ENCODE measurements at regions of chr1 and their contacts with region 1.

Region 1: GRCh38 chr1:162633081-162633762 is 958 bp downstream of the DDR2 start:
- DNase-seq: no peak
- H3K4me3 ChIP-seq: peak overlapping the region; percentile 7 to 9
- H3K27ac ChIP-seq: peak overlapping the region; percentile 71 to 72
- H3K4me1 ChIP-seq: no peaks in the 10 kb centered on the region
- H3K27me3 ChIP-seq: no peaks in the 10 kb centered on the region
- CTCF ChIP-seq: no peak
- POLR2A ChIP-seq: no peak

Region 2: DNA sequence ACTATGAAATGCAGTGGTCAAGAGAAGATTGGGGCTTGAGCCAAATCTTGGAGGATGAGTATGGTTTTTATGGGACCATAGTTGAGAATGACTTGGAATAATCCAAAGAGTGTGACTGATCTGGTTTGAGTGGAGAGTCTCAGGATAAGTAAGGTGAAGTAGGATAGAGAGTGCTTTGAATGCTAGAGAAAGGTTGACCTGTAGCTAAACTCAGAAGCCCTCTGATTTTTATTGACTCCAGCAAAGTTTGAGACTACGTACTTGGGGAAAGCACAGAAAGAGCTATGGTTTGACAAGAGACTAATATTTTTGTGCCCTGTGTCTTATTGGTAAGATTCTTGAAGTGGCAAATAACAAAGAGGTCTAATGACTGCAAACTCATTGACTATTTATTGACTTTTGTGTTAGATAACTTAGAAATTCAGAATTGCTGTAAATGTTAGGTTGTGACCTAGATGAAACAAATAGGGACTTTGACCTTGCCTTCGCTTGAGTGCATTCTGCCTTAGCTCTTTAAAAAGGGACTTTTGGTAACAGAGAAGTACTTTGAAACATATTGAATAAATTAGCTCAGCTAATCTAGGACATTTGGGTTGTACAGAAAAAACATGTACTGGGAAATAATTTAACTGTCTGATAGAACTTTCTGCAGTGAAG is 36.6 kb before region 1 on chr1:
- intact Hi-C with region 1: no loop called
- DNase-seq: no peak
- H3K4me3 ChIP-seq: no peak overlapping the region
- H3K27ac ChIP-seq: no peak overlapping the region
- H3K4me1 ChIP-seq: no peaks in the 10 kb centered on the region
- H3K27me3 ChIP-seq: no peaks in the 10 kb centered on the region
- CTCF ChIP-seq: no peak
- POLR2A ChIP-seq: no peak

Region 3: GRCh38 chr1:162678439-162678838 is 45.2 kb after region 1 on chr1:
- intact Hi-C with region 1: loop called (anchors 5 kb)
- DNase-seq: peak; percentile 36
- H3K4me3 ChIP-seq: no peak overlapping the region
- H3K27ac ChIP-seq: no peak overlapping the region
- H3K4me1 ChIP-seq: no peaks in the 10 kb centered on the region
- H3K27me3 ChIP-seq: no peaks in the 10 kb centered on the region
- CTCF ChIP-seq: no peak
- POLR2A ChIP-seq: no peak

Region 4: DNA sequence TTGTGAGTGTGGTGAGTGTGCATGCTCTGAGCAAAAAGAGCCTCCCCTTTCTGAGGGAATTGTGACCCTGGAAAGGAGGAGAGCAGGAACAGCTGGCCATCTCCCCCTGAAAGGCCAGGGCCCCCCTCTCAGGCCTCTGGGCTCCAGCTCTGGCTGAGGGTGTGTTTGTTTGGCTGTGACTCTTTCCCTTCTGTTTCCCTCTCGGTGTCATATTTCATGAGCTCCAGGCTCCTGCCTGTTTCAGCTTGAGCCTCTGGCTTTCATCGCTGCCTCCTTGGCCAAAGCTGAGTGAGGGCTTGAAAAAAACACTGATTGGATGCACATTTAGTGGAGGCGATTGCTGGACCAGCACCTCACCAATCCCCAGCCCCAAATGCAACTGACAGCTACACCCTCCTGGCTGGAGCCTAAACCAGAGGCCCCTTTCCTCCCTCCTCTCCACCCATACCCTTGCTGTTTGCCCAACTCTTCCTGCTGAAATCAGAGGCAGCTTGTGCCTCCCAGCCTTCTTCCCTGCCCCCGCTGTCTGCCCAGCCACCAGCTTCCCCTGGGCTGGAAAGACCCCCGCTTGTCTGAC is 63.2 kb after region 1 on chr1:
- intact Hi-C with region 1: no loop called
- DNase-seq: peak; percentile 89
- H3K4me3 ChIP-seq: no peak overlapping the region
- H3K27ac ChIP-seq: peak overlapping the region; percentile 71 to 74
- H3K4me1 ChIP-seq: peaks cover 7% of the 10 kb centered on the region
- H3K27me3 ChIP-seq: no peaks in the 10 kb centered on the region
- CTCF ChIP-seq: no peak
- POLR2A ChIP-seq: peak; percentile 30

Measured in prostate gland (tissue), 2 donors.